ENCODE measurements at regions of chr11 and their contacts with region 1.

Region 1: DNA sequence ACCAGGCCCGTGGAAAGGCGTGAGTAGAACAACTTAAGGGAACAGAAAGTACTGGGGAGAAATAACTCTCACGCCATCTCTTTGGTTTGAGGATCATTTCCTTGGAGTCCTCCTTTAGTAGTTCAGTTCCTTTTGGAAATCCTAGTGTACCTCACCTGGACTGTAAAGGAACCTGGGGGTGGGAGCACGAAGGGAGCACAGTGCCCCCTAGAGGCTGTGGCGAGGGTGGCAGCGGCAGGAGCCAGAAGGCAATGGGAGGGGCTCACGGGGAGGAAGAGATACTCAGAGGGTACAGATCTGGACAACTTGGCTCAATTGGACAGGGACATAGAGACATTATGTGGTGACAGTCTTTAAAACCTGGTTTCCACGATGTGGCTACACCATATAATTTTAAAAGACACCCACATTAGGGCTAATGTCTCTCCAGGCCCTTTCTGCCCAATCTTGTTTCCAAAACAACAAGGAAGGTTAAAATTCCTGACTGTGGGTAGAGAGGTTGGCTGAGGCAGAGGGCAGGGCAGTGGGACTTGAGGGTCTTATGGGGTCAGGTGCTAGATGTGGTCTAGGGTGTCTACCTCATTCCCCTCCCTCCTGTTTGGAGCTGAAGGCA is 87.0 kb downstream of the CSNK2A3 start:
- DNase-seq: no peak
- H3K4me3 ChIP-seq: no peak overlapping the region
- H3K27ac ChIP-seq: no peak overlapping the region
- H3K4me1 ChIP-seq: peaks cover 10% of the 10 kb centered on the region
- H3K27me3 ChIP-seq: no peaks in the 10 kb centered on the region
- CTCF ChIP-seq: peak; percentile 86

Region 2: DNA sequence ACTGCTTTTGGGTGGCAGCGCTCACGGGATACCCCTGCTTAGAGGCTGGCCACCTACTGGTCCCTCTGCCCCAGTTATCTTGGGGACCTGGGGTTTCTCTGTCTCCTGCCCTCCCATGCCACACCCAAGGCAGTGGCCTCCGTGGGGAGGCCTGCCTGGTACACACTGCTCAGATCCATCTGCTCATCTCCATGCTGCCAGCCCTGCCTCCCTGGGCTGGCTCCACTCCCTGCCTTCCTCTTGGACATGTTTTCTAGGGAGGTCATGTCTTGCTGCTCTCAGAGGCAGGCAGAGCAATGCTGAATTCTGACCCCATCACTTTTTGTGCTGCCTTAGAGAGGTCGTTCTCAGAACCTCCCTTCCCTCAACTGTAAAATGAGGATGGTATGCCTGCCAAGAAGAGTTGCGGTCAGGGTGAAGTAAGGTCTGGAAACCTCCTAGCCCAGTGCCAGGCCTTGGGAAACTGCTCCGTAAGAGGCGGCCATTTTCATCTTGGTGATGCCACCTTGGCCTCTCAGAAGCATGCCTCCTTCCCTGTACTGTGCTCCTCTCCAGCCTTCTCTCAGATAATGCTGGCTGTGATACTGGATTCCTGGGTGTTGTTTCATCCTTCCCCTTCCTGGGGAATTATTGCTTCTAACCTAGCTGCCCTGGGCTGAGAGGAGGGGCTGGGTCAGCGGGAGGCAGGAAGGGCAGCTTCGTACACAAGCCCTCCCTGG is 221.8 kb before region 1 on chr11:
- intact Hi-C with region 1: loop called (anchors 10 kb)
- DNase-seq: no peak
- H3K4me3 ChIP-seq: no peak overlapping the region
- H3K27ac ChIP-seq: no peak overlapping the region
- H3K4me1 ChIP-seq: no peaks in the 10 kb centered on the region
- H3K27me3 ChIP-seq: no peaks in the 10 kb centered on the region
- CTCF ChIP-seq: no peak

Measured in left ventricle myocardium inferior (tissue), 1 donor.